A673 (cell line): ENCODE measurements at regions of chr15 and their contacts with region 1.

Region 1: DNA sequence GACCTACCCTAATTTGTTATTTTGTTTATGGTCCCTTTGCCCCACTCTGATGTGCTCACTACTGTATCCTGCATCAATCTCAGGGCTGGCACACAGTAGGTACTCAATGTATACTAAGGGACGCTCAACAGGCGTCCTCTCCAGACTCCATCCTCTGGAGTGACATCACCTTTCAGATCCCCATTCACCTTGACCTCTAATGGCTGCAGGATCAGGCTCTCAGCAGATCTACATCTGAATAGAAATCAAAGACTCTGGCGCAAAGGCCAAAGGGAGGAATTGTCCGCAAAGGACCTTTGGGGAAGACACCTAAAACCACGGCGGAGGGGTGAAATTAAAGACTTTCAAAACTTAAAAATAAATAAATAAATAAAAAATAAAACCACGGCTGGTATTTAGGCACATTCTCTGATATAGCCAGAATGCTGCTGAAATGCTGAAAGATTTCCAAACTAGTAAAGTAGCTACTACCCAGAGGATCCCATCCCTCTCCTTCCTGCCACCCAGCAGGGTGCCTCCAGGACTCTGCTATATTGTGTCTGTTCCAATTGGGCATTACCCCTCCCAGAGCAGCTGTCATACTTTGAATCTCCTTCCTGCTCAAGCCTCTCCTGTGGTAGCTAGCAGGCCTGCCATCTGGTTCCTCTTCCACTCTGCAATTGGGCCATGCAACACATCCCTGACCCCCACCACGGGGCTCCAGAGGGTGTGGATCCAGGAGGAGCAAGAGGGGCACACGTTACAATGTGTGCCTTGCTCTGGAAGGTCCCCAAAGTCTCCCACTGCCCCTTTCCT is 6.1 kb downstream of the SHF start:
- DNase-seq: peak; percentile 94
- H3K4me3 ChIP-seq: no peak overlapping the region
- H3K27ac ChIP-seq: peak overlapping the region; percentile 80
- H3K4me1 ChIP-seq: peaks cover 54% of the 10 kb centered on the region
- H3K27me3 ChIP-seq: no peaks in the 10 kb centered on the region
- CTCF ChIP-seq: no peak

Region 2: DNA sequence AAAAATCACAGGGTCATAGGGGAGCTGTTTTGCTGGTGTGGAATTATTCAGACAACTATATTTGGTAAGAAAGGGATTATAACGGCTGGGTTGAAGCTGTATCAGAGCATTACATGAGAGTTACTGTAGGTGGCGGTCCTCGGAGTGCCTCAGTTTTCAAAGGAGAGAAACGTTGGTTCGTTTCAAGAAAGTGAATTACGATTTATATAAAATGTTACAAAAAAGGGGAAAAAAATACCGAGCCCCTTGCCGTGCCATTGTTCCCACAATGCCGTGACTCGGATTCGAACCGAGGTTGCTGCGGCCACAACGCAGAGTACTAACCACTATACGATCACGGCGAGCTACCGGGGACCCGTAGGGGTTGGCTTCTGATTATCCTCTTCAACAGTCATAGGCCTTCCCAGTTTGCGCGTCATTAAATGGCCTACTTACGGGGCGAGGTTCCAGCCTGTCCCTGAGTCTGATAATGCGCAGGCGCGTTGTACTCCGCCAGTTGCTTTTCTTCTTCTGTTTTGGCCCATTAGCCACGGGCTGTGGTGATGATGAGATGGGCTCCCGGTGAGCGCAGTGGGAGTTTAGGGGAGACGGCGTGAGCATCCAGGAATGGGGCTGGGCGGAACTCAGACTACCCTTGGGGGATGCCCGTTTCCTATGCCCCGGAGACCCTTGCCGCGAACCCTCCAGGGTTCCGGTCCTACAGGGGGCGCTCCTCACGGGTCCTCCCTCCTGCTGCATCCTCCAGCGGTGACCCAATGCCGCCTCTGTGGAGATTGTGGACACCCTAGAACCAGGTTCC is 16.8 kb after region 1 on chr15:
- CTCF ChIA-PET with region 1: interaction called, 6 read pairs
- POLR2A ChIA-PET with region 1: interaction called, 4 read pairs
- intact Hi-C with region 1: loop called (anchors 2 kb)
- DNase-seq: peak; percentile 96
- H3K4me3 ChIP-seq: peak overlapping the region; percentile 72
- H3K27ac ChIP-seq: peak overlapping the region; percentile 92
- H3K4me1 ChIP-seq: peaks cover 5% of the 10 kb centered on the region
- H3K27me3 ChIP-seq: no peaks in the 10 kb centered on the region
- CTCF ChIP-seq: peak; percentile 89